ENCODE measurements at regions of chrX and their contacts with region 1.

Region 1: DNA sequence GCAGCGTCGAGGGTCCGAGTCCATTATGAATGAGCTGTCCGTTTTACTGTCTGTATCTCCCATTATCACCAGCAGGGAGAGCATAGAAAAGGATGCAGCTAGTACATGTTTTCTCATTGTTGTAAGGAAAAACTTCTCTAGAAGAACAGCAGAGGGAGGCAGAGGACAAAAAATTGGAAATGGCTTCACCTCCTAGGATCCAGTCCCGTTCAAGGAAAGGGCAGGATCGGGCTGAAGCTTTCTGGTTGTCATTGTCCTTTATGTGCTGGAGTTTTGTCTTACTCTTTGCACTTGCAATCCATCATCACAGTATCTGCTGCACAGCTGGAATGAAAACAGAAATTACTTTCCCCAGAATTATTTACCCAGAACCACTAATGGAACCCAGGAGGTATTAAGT is 14.7 kb downstream of the NDP start:
- DNase-seq: peak; percentile 39 to 73 (median 50)
- ATAC-seq: peak; percentile 88
- H3K4me3 ChIP-seq: no peak overlapping the region
- H3K27ac ChIP-seq: no peak overlapping the region
- H3K4me1 ChIP-seq: no peaks in the 10 kb centered on the region
- H3K27me3 ChIP-seq: no peaks in the 10 kb centered on the region
- CTCF ChIP-seq: peak; percentile 74 to 93 (median 92)
- EP300 ChIP-seq: no peak
- POLR2A ChIP-seq: no peak
- RAD21 ChIP-seq: peak; percentile 83 to 87

Region 2: GRCh38 chrX:43718546-43719320 is 239.8 kb before region 1 on chrX:
- CTCF ChIA-PET with region 1: no interaction called
- POLR2A ChIA-PET with region 1: no interaction called
- in situ Hi-C with region 1: no loop called
- intact Hi-C with region 1: no loop called
- DNase-seq: no peak
- ATAC-seq: no peak
- H3K4me3 ChIP-seq: no peak overlapping the region
- H3K27ac ChIP-seq: no peak overlapping the region
- H3K4me1 ChIP-seq: no peaks in the 10 kb centered on the region
- H3K27me3 ChIP-seq: no peaks in the 10 kb centered on the region
- CTCF ChIP-seq: no peak
- EP300 ChIP-seq: no peak
- POLR2A ChIP-seq: no peak
- RAD21 ChIP-seq: no peak

Region 3: GRCh38 chrX:43750248-43750676 is 208.3 kb before region 1 on chrX:
- CTCF ChIA-PET with region 1: no interaction called
- POLR2A ChIA-PET with region 1: no interaction called
- in situ Hi-C with region 1: no loop called
- intact Hi-C with region 1: no loop called
- DNase-seq: peak; percentile 37 to 55 (median 40)
- ATAC-seq: peak; percentile 86
- H3K4me3 ChIP-seq: no peak overlapping the region
- H3K27ac ChIP-seq: no peak overlapping the region
- H3K4me1 ChIP-seq: no peaks in the 10 kb centered on the region
- H3K27me3 ChIP-seq: peaks cover 0 to under 1% of the 10 kb centered on the region in 2 experiments; a peak in 1 of 5 replicates
- CTCF ChIP-seq: peak; percentile 47 to 68 (median 55)
- EP300 ChIP-seq: no peak
- POLR2A ChIP-seq: no peak
- RAD21 ChIP-seq: peak; percentile 73 to 82

Region 4: GRCh38 chrX:43836435-43837184 is 121.9 kb before region 1 on chrX:
- CTCF ChIA-PET with region 1: interaction called, 4 read pairs
- POLR2A ChIA-PET with region 1: no interaction called
- in situ Hi-C with region 1: no loop called
- intact Hi-C with region 1: loop called (anchors 10 kb)
- DNase-seq: peak; percentile 4 to 25 (median 6)
- ATAC-seq: no peak
- H3K4me3 ChIP-seq: no peak overlapping the region
- H3K27ac ChIP-seq: no peak overlapping the region
- H3K4me1 ChIP-seq: no peaks in the 10 kb centered on the region
- H3K27me3 ChIP-seq: no peaks in the 10 kb centered on the region
- CTCF ChIP-seq: peak; percentile 27 to 52 (median 32); a peak in 4 of 6 replicates
- EP300 ChIP-seq: no peak
- POLR2A ChIP-seq: no peak
- RAD21 ChIP-seq: peak; percentile 37 to 60; a peak in 3 of 4 replicates

Region 5: GRCh38 chrX:43899878-43900815 is 58.4 kb before region 1 on chrX:
- CTCF ChIA-PET with region 1: no interaction called
- POLR2A ChIA-PET with region 1: no interaction called
- in situ Hi-C with region 1: no loop called
- intact Hi-C with region 1: no loop called
- DNase-seq: no peak
- ATAC-seq: no peak
- H3K4me3 ChIP-seq: no peak overlapping the region
- H3K27ac ChIP-seq: no peak overlapping the region
- H3K4me1 ChIP-seq: no peaks in the 10 kb centered on the region
- H3K27me3 ChIP-seq: no peaks in the 10 kb centered on the region
- CTCF ChIP-seq: no peak
- EP300 ChIP-seq: no peak
- POLR2A ChIP-seq: no peak
- RAD21 ChIP-seq: no peak

Region 6: DNA sequence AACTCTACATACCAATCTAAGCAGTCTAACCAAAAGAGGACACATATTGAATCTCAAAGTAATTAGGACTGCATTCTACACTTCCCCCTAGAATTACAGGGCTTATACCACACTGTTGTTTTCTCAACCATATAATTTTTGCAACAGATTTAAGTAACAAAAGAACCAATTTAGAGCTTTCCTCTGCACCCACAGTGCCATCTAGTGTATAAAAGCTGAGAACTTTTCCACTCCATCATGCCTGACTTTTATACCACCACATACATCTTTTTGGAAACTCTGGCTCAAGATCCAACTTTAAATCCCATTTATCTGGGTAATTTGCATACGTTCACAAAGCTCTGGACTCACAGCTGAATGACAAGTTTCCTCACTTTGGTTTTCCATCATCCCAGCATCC is 285.5 kb after region 1 on chrX:
- CTCF ChIA-PET with region 1: interaction called, 3 read pairs
- POLR2A ChIA-PET with region 1: no interaction called
- in situ Hi-C with region 1: no loop called
- intact Hi-C with region 1: loop called (anchors 5 kb)
- DNase-seq: peak in 2 of 4 experiments; percentile 13 to 33
- ATAC-seq: peak; percentile 44; the same call in 2 of the 3 replicates
- H3K4me3 ChIP-seq: no peak overlapping the region
- H3K27ac ChIP-seq: no peak overlapping the region
- H3K4me1 ChIP-seq: no peaks in the 10 kb centered on the region
- H3K27me3 ChIP-seq: no peaks in the 10 kb centered on the region
- CTCF ChIP-seq: peak; percentile 43 to 54 (median 45); a peak in 4 of 6 replicates
- EP300 ChIP-seq: no peak
- POLR2A ChIP-seq: no peak
- RAD21 ChIP-seq: peak; percentile 48 to 59

Region 7: DNA sequence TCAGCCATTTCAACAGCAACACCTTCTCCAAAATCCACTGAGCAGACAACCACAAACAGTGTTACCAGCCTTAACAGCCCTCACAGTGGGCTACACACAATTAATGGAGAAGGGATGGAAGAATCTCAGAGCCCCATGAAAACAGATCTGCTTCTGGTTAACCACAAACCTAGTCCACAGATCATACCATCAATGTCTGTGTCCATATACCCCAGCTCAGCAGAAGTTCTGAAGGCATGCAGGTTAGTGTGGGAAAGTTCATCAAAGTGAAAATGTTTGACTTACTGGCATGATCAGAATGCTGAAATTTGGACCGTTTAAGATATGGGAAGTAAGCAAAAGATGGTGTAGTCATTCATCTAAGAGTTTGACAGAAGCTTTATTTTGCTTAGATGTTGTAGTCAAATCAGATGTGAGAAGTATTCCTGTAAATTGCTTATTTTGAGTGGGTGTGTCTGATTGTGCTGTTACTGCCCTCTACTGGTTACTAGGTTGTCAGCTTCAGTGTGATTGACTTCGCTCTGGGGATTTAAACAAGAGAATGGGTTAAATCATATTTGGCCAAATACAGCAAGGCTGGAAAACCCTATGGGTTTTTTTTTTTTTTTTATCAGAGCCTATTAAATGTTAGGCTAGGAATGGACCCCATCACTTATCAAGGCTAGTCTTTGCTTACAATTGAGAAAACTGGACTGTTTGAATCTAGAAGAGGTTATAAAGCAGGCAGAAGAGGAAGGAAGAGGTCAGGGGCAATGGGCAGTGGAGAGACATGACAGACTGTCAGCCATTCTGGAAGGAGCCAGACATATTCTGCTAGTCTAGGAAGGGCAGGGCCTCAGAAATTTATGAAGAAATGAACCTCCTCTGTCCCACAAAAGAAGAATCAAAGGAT is 1111.8 kb after region 1 on chrX:
- CTCF ChIA-PET with region 1: no interaction called
- POLR2A ChIA-PET with region 1: no interaction called
- in situ Hi-C with region 1: loop called (anchors 25 kb)
- intact Hi-C with region 1: no loop called
- DNase-seq: peak; percentile 10 to 58 (median 14)
- ATAC-seq: peak; percentile 83
- H3K4me3 ChIP-seq: no peak overlapping the region
- H3K27ac ChIP-seq: no peak overlapping the region
- H3K4me1 ChIP-seq: no peaks in the 10 kb centered on the region
- H3K27me3 ChIP-seq: no peaks in the 10 kb centered on the region
- CTCF ChIP-seq: peak; percentile 39 to 67 (median 57)
- EP300 ChIP-seq: no peak
- POLR2A ChIP-seq: no peak
- RAD21 ChIP-seq: peak; percentile 55 to 62

Measured in K562 (cell line).